PC-9 (cell line): ENCODE measurements at regions of chr2 and their contacts with region 1.

Region 1: DNA sequence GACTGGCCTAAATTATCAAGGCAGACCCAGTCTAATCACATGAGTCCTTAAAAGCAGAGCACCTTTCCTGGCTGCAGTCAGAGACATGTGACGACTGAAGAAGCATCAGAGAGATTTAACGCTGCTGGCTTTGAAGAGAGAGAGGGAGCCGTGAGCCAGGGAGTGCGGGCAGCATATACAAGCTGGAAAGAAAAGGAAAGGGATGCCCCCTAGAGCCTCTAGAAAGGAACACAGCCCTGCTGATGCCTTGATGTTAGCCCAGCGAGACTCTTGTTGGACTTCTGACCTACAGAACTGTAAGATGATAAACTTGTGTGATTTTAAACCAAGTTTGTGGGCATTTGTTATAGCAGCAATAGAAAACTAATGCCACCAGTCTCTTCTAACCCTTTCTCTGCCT is 58.1 kb downstream of the HEATR5B start:
- DNase-seq: no peak
- H3K4me3 ChIP-seq: no peak overlapping the region
- H3K27ac ChIP-seq: no peak overlapping the region
- H3K4me1 ChIP-seq: no peaks in the 10 kb centered on the region
- H3K27me3 ChIP-seq: no peaks in the 10 kb centered on the region
- CTCF ChIP-seq: peak; percentile 57

Region 2: GRCh38 chr2:37013315-37013641 is 12.8 kb before region 1 on chr2:
- CTCF ChIA-PET with region 1: no interaction called
- POLR2A ChIA-PET with region 1: interaction called, 12 read pairs
- intact Hi-C with region 1: no loop called
- DNase-seq: no peak
- H3K4me3 ChIP-seq: no peak overlapping the region
- H3K27ac ChIP-seq: no peak overlapping the region
- H3K4me1 ChIP-seq: no peaks in the 10 kb centered on the region
- H3K27me3 ChIP-seq: no peaks in the 10 kb centered on the region
- CTCF ChIP-seq: no peak